Naive thymus-derived CD4-positive, alpha-beta T cell (primary cell): ENCODE measurements at regions of chr4 and their contacts with region 1.

Region 1: DNA sequence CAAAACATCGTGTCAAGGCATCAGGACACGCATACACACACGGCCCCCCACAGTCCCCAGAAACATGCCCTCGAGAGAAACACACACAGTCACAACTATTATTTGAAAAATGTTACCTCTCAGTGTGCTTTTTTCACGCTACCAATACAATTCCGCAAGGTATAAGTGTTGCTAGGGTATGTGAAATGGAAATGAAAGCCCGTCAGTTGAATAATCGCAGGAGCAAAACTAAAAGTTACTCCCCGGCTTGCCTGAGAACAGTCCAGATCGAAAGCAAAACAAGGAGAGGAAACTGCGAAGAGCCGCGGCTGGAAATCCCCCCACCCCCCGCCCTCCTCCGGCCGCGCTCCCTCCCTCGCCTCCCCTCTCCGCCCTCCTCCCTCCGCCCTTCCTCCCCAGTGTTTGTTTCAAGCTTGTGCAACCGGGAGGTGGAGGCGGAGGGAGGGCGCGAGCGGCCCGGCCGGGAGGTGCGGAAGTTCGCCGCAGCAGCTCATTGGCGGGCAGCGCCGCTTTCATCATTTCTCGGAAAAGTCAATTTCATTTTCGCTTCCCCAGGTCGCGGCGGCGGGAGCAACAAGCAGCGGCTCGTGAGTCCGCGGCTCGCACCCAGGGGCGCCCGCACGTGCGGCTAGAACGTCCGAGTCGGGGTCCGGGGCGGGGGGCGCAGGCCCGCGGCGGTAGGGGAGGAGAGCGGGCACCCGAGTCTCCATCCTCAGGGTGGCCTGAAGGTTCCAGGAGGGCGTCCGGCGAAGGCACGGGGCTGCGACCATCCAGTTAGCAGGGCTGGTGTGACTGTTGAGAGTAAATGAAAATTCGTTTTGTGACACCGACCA is at the start of gene IRF2:
- DNase-seq: peak; percentile 80 to 98 (median 95)
- ATAC-seq: peak; percentile 93
- H3K4me3 ChIP-seq: peak within 1 kb of the TSS; percentile 89
- H3K4me3 Mint-ChIP-seq: peak within 1 kb of the TSS; percentile 97 to 100 (median 99)
- H3K27ac ChIP-seq: peak within 1 kb of the TSS; percentile 96
- H3K27ac Mint-ChIP-seq: peak within 1 kb of the TSS; percentile 95 to 100 (median 99)
- H3K4me1 ChIP-seq: peaks cover 27 to 34% of the 10 kb centered on the region in 2 donors
- H3K4me1 Mint-ChIP-seq: peaks cover 39 to 72% (median 66%) of the 10 kb centered on the region in 7 donors
- H3K27me3 ChIP-seq: no peaks in the 10 kb centered on the region
- H3K27me3 Mint-ChIP-seq: peaks cover 0 to 4% (median 0%) of the 10 kb centered on the region in 5 donors
- total RNA-seq, gene IRF2: 31.2 to 86.3 (median 75.0) TPM

Region 2: DNA sequence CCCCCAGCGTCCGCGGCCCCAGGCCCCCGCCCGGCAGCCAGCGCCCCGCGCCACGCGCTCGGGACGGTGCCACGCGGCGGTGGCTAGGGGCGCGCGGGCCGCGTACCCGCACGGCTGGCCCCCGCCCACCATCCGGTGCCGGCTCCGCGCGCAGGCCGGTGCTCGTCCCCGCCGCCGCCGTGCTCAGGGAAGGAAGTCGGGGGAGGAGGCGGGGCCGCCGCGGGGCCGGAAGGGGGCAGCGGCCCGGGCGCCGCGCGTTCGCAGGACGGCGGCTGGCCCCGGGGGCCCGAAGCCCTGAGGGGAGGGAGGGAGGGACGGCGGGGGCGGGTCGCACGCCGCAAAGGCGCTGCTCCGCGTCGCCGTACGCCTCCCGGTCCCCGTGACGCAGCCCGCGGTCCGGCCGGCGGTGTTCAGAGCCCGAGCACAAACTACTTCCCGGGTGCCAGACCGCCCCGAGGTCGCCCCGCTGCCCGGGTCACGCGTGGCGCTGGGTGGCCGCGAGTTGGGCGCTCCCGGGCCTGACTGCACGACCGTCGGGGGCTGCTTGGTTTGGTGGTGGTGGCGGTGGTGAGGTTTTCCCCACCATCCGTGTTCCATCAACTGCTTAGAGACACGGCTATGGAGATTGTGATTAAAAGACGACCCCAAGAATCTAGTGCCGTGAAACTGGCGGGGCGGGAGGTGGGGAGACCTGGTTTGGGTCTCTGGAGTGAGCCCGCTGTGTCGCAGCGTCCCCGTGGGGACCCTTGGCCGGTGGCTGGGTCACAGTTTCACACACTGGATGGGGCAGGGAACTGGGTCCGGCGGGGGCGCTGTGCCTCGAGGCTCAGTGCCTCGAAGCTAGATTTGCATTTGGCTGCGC is 1557.1 kb before region 1 on chr4 and contains the start of gene DCTD:
- CTCF ChIA-PET with region 1: no interaction called
- POLR2A ChIA-PET with region 1: no interaction called
- intact Hi-C with region 1: loop called in 1 of 2 experiments (anchors 5 kb)
- DNase-seq: peak; percentile 71 to 90 (median 80)
- ATAC-seq: peak; percentile 89
- H3K4me3 ChIP-seq: peak within 1 kb of the TSS; percentile 77
- H3K4me3 Mint-ChIP-seq: peak within 1 kb of the TSS; percentile 75 to 95 (median 90)
- H3K27ac ChIP-seq: peak within 1 kb of the TSS; percentile 89
- H3K27ac Mint-ChIP-seq: peak within 1 kb of the TSS; percentile 86 to 98 (median 92)
- H3K4me1 ChIP-seq: peaks cover 20 to 26% of the 10 kb centered on the region in 2 donors
- H3K4me1 Mint-ChIP-seq: peaks cover 17 to 58% (median 50%) of the 10 kb centered on the region in 7 donors
- H3K27me3 ChIP-seq: no peaks in the 10 kb centered on the region
- H3K27me3 Mint-ChIP-seq: peaks cover 0 to 6% (median 0%) of the 10 kb centered on the region in 5 donors
- total RNA-seq, gene DCTD: 61.4 to 76.2 (median 68.9) TPM

Region 3: GRCh38 chr4:184263910-184264732 is 210.4 kb before region 1 on chr4:
- CTCF ChIA-PET with region 1: interaction called, 7 read pairs
- POLR2A ChIA-PET with region 1: interaction called, 17 read pairs
- intact Hi-C with region 1: loop called (anchors 1 kb)
- DNase-seq: peak; percentile 80 to 90 (median 87)
- ATAC-seq: peak; percentile 86
- H3K4me3 ChIP-seq: no peak overlapping the region
- H3K4me3 Mint-ChIP-seq: peak overlapping the region in 1 of 10 donors; percentile 17
- H3K27ac ChIP-seq: no peak overlapping the region
- H3K27ac Mint-ChIP-seq: peak overlapping the region in 6 of 9 donors; percentile 5 to 72 (median 63)
- H3K4me1 ChIP-seq: peaks cover 6 to 14% of the 10 kb centered on the region in 2 donors
- H3K4me1 Mint-ChIP-seq: peaks cover 5 to 54% (median 28%) of the 10 kb centered on the region in 7 donors
- H3K27me3 ChIP-seq: no peaks in the 10 kb centered on the region
- H3K27me3 Mint-ChIP-seq: peaks cover 0 to 2% (median 0%) of the 10 kb centered on the region in 5 donors

Region 4: DNA sequence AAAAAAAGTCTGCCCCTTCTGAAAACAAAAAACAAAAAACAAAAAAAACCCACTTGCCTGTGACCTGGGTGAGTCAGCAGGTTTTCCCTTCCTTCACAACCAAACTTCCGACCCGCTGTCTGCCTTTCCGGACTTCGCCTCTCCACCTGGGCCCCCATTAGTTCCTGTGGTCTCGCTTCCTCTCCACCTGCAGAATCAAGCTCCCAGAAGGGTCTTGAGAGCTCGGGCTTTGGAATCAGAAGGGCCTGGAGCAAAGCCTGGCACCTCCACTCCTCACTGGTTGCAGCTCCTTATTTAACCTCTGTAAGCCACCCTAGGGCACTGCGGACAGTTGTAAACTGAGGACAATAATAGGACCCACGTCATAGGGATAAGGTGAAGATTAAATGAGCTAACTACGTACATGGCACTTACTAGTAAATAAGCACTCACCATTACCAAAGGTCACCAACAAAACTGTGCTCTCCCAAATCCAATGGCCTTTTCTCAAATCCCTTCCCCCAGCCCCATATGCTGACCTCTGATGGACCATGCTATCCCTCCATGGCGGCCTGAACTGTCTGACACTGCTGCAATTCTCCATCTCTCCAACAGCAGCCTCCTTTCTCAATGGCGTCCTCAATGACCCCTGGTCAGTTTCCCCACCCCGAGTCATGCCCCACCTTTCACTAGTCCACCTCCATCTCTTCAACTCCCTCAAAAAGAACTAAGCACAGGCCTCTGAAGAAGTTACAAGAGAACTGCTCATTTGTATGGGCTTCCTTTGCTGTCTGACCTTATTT is 64.4 kb before region 1 on chr4:
- CTCF ChIA-PET with region 1: no interaction called
- POLR2A ChIA-PET with region 1: interaction called, 4 read pairs
- intact Hi-C with region 1: loop called in 1 of 2 experiments (anchors 1 kb)
- DNase-seq: peak in 3 of 9 donors; percentile 10 to 29 (median 24)
- ATAC-seq: no peak
- H3K4me3 ChIP-seq: no peak overlapping the region
- H3K4me3 Mint-ChIP-seq: peak overlapping the region; percentile 40 to 80 (median 68)
- H3K27ac ChIP-seq: peak overlapping the region; percentile 11
- H3K27ac Mint-ChIP-seq: peak overlapping the region; percentile 11 to 92 (median 88)
- H3K4me1 ChIP-seq: peaks cover 23 to 26% of the 10 kb centered on the region in 2 donors
- H3K4me1 Mint-ChIP-seq: peaks cover 35 to 80% (median 67%) of the 10 kb centered on the region in 7 donors
- H3K27me3 ChIP-seq: no peaks in the 10 kb centered on the region
- H3K27me3 Mint-ChIP-seq: no peaks in the 10 kb centered on the region

Region 5: GRCh38 chr4:184460499-184461285 is 13.8 kb before region 1 on chr4:
- CTCF ChIA-PET with region 1: no interaction called
- POLR2A ChIA-PET with region 1: interaction called, 7 read pairs
- intact Hi-C with region 1: loop called (anchors 1 to 2 kb)
- DNase-seq: no peak
- ATAC-seq: peak; percentile 56
- H3K4me3 ChIP-seq: no peak overlapping the region
- H3K4me3 Mint-ChIP-seq: peak overlapping the region in 9 of 10 donors; percentile 6 to 75 (median 53)
- H3K27ac ChIP-seq: peak overlapping the region; percentile 30
- H3K27ac Mint-ChIP-seq: peak overlapping the region in 7 of 9 donors; percentile 55 to 91 (median 84)
- H3K4me1 ChIP-seq: peaks cover 12 to 16% of the 10 kb centered on the region in 2 donors
- H3K4me1 Mint-ChIP-seq: peaks cover 70 to 98% (median 84%) of the 10 kb centered on the region in 7 donors
- H3K27me3 ChIP-seq: no peaks in the 10 kb centered on the region
- H3K27me3 Mint-ChIP-seq: no peaks in the 10 kb centered on the region

Region 6: DNA sequence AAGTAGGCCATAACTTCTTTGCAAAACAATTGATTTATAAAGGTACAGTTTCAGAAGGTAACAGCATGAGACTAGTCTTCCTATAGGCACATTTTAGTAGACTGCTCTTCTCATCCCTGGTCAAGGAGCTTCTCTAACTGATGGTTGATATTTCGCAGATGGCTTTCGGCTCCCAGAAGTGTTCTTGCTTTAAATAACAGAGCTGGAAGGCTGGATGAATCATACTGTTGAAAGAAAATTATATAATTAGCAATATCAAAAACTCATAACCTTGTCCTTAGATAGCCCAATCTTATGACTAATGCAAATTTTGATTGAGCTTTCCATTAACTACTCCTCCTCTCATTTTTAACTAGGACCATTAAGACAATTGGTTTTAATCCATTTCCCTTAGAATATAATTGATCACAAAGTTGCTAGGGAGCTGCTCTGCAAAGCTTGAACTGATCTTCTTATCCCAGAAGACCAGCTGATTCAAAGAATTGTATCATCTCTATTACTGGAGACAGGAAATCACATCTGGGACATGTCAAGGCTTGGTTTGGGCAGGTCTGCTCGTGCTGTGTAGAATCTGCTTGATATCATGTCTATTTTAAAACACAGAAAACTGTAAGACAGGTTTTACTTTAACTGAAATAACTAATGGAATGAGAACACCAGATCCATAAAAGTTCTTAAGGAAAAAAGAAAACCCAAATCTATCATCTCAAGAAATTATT is 220.9 kb after region 1 on chr4:
- CTCF ChIA-PET with region 1: no interaction called
- POLR2A ChIA-PET with region 1: no interaction called
- intact Hi-C with region 1: no loop called
- DNase-seq: no peak
- ATAC-seq: no peak
- H3K4me3 ChIP-seq: no peak overlapping the region
- H3K4me3 Mint-ChIP-seq: no peak overlapping the region
- H3K27ac ChIP-seq: no peak overlapping the region
- H3K27ac Mint-ChIP-seq: peak overlapping the region in 2 of 9 donors; percentile 17 to 50
- H3K4me1 ChIP-seq: no peaks in the 10 kb centered on the region
- H3K4me1 Mint-ChIP-seq: peaks cover 0 to 11% (median 0%) of the 10 kb centered on the region in 7 donors
- H3K27me3 ChIP-seq: no peaks in the 10 kb centered on the region
- H3K27me3 Mint-ChIP-seq: no peaks in the 10 kb centered on the region

Region 7: DNA sequence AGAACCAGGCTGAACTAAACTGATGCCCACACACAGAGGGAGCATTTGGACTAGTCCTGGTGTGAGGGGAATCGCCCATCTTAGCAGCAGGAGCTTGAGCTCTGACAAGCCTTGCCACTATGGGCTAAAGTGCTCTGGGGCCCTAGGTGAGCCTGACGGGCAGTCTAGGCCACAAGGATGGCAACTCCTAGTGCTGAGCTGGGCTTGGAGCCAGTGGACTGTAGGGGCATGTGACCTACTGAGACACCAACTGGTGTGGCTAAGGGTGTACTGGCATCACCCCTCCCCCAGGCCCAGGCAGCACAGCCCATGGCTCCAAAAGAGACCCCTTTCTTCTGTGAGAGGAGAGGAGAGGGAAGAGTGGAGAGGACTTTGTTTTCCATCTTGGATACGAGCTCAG is 244.9 kb after region 1 on chr4:
- CTCF ChIA-PET with region 1: no interaction called
- POLR2A ChIA-PET with region 1: no interaction called
- intact Hi-C with region 1: no loop called
- DNase-seq: no peak
- ATAC-seq: no peak
- H3K4me3 ChIP-seq: no peak overlapping the region
- H3K4me3 Mint-ChIP-seq: no peak overlapping the region
- H3K27ac ChIP-seq: no peak overlapping the region
- H3K27ac Mint-ChIP-seq: no peak overlapping the region
- H3K4me1 ChIP-seq: no peaks in the 10 kb centered on the region
- H3K4me1 Mint-ChIP-seq: peaks cover 0 to 51% (median 0%) of the 10 kb centered on the region in 7 donors
- H3K27me3 ChIP-seq: no peaks in the 10 kb centered on the region
- H3K27me3 Mint-ChIP-seq: no peaks in the 10 kb centered on the region

Region 8: DNA sequence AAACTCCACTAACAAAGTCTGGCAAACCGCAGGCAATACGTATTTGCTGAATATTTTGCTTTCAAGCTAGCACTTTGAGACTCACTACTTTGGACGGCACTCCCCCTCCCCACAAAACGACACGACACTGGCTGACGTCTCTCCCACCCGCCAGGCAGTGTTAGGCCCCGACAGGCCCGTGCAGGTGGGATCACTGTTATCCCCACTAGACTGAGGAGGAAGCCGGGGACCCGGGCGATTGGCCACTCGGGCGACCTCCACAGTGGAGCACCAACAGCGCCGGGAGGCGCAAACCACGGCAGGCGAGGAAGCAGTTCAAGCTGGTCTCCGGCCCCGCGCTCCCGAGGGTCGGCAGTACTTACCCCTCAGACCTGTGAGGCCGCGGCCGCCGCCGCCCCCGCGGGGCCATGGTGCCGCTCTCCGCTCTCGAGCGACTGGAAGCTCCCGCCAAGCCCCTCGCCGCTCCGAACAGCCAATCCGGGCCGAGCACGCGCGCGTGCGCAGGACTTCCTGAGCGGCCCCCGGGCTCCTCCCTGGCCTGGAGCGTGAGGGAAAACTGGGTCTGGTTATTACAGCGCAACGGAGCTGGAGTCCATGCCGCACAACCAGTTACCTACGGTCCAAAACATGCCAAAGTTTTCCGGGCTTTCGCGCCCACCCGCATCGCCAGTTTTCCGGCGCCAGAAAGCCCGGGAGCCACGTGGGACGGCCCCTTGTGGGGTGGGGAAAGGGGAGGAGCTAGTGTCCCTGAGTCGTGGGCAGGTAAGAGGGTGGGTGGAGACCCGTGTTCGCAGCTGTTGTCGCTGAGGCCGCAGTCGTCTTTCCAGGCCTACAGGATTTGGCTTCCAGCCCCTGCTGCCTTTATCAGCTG is 259.4 kb after region 1 on chr4 and contains the start of gene CENPU:
- CTCF ChIA-PET with region 1: no interaction called
- POLR2A ChIA-PET with region 1: no interaction called
- intact Hi-C with region 1: loop called (anchors 1 kb)
- DNase-seq: peak; percentile 89 to 98 (median 94)
- ATAC-seq: peak; percentile 98
- H3K4me3 ChIP-seq: peak within 1 kb of the TSS; percentile 82
- H3K4me3 Mint-ChIP-seq: peak within 1 kb of the TSS; percentile 84 to 98 (median 89)
- H3K27ac ChIP-seq: peak within 1 kb of the TSS; percentile 66
- H3K27ac Mint-ChIP-seq: peak within 1 kb of the TSS; percentile 60 to 96 (median 89)
- H3K4me1 ChIP-seq: peaks cover 7 to 11% of the 10 kb centered on the region in 2 donors
- H3K4me1 Mint-ChIP-seq: peaks cover 4 to 50% (median 20%) of the 10 kb centered on the region in 7 donors
- H3K27me3 ChIP-seq: no peaks in the 10 kb centered on the region
- H3K27me3 Mint-ChIP-seq: no peaks in the 10 kb centered on the region
- total RNA-seq, gene CENPU: 1.1 to 43.8 (median 3.1) TPM

Region 9: GRCh38 chr4:185203486-185204237 is 729.2 kb after region 1 on chr4 and contains the start of gene CFAP97:
- CTCF ChIA-PET with region 1: no interaction called
- POLR2A ChIA-PET with region 1: no interaction called
- intact Hi-C with region 1: loop called (anchors 1 to 2 kb)
- DNase-seq: peak; percentile 78 to 90 (median 85)
- ATAC-seq: peak; percentile 89
- H3K4me3 ChIP-seq: peak within 1 kb of the TSS; percentile 64
- H3K4me3 Mint-ChIP-seq: peak within 1 kb of the TSS; percentile 87 to 99 (median 96)
- H3K27ac ChIP-seq: peak within 1 kb of the TSS; percentile 75
- H3K27ac Mint-ChIP-seq: peak within 1 kb of the TSS; percentile 95 to 99 (median 98)
- H3K4me1 ChIP-seq: peaks cover 22% of the 10 kb centered on the region in 2 donors
- H3K4me1 Mint-ChIP-seq: peaks cover 28 to 60% (median 53%) of the 10 kb centered on the region in 7 donors
- H3K27me3 ChIP-seq: no peaks in the 10 kb centered on the region
- H3K27me3 Mint-ChIP-seq: peaks cover 0 to 3% (median 0%) of the 10 kb centered on the region in 5 donors
- total RNA-seq, gene CFAP97: 23.6 to 46.5 (median 38.0) TPM